Heart left ventricle (tissue), 16 donors: ENCODE measurements at regions of chr21 and their contacts with region 1.

Region 1: DNA sequence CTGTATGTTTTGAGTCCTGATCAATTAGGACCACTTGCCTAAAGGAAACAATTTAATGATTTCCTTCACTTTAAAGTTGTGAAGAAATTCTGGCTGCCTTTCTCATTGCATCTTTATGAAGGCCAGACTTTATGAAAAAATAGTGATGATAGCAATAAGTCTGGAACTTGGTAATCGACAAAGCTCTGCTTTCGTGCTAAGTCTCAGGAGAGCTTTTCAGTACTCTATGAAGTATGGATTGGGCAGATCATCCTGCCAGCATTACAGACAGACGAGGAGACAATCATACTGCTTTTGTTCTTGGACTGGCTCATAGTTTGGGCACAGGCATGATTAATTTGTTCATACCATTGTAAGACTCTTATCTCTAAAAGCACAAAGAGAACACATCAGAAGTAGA is 45.5 kb upstream of the KCNJ15 start:
- DNase-seq: no peak
- ATAC-seq: no peak
- H3K4me3 ChIP-seq: no peak overlapping the region
- H3K27ac ChIP-seq: no peak overlapping the region
- H3K4me1 ChIP-seq: no peaks in the 10 kb centered on the region
- H3K27me3 ChIP-seq: peaks cover 0 to 28% (median 0%) of the 10 kb centered on the region in 9 donors
- CTCF ChIP-seq: no peak
- POLR2A ChIP-seq: no peak

Region 2: GRCh38 chr21:38140210-38140907 is 71.0 kb before region 1 on chr21:
- intact Hi-C with region 1: no loop called
- DNase-seq: peak in 3 of 5 donors; percentile 49 to 65 (median 53)
- ATAC-seq: peak; percentile 76 to 88 (median 80)
- H3K4me3 ChIP-seq: no peak overlapping the region
- H3K27ac ChIP-seq: no peak overlapping the region
- H3K4me1 ChIP-seq: peaks cover 0 to 9% (median 0%) of the 10 kb centered on the region in 12 donors
- H3K27me3 ChIP-seq: no peaks in the 10 kb centered on the region
- CTCF ChIP-seq: no peak
- POLR2A ChIP-seq: no peak

Region 3: GRCh38 chr21:38159355-38159754 is 52.0 kb before region 1 on chr21:
- intact Hi-C with region 1: loop called in 3 of 10 experiments (anchors 5 kb)
- DNase-seq: peak in 4 of 5 donors; percentile 45 to 70 (median 50)
- ATAC-seq: peak in 3 of 4 donors; percentile 55 to 66 (median 65)
- H3K4me3 ChIP-seq: no peak overlapping the region
- H3K27ac ChIP-seq: no peak overlapping the region
- H3K4me1 ChIP-seq: peaks cover 0 to 7% (median 0%) of the 10 kb centered on the region in 12 donors
- H3K27me3 ChIP-seq: peaks cover 0 to 18% (median 5%) of the 10 kb centered on the region in 9 donors
- CTCF ChIP-seq: peak; percentile 66 to 88 (median 80)
- POLR2A ChIP-seq: no peak